ENCODE measurements at regions of chr2 and their contacts with region 1.

Region 1: DNA sequence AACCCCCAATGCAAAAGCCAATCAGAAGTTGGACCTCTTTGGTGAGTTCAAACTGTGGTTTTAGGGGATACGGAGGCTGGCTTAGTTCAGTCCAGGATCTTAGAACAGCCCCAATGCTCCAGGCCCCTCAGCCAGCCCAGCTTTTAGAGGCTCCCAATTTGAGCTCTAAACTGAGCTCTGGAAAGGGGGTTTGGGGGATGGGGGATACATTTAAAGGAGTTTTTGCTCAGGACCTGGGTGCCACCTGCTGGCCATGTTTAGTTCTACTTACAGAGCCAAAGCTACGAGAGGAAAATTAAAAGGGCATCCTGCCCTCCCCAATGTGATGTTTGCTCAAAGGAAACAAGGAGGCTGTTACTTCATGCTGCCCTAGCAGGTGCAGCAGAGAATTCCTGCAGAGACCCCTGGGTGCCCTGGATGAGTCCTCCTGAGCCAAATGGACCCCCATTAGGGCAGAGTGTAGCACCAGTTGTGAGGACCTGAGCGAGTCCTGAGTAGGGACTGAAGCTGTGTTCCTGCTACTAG is 15.9 kb upstream of the TMEM214 start:
- DNase-seq: peak; percentile 70
- H3K4me3 Mint-ChIP-seq: no peak overlapping the region
- H3K27ac Mint-ChIP-seq: no peak overlapping the region
- H3K4me1 Mint-ChIP-seq: peaks cover 37% of the 10 kb centered on the region
- H3K27me3 Mint-ChIP-seq: no peaks in the 10 kb centered on the region
- CTCF ChIP-seq: peak; percentile 83

Region 2: GRCh38 chr2:26892922-26893524 is 123.8 kb before region 1 on chr2:
- CTCF ChIA-PET with region 1: no interaction called
- intact Hi-C with region 1: no loop called
- DNase-seq: no peak
- H3K4me3 Mint-ChIP-seq: no peak overlapping the region
- H3K27ac Mint-ChIP-seq: no peak overlapping the region
- H3K4me1 Mint-ChIP-seq: no peaks in the 10 kb centered on the region
- H3K27me3 Mint-ChIP-seq: peaks cover 68% of the 10 kb centered on the region
- CTCF ChIP-seq: no peak

Region 3: DNA sequence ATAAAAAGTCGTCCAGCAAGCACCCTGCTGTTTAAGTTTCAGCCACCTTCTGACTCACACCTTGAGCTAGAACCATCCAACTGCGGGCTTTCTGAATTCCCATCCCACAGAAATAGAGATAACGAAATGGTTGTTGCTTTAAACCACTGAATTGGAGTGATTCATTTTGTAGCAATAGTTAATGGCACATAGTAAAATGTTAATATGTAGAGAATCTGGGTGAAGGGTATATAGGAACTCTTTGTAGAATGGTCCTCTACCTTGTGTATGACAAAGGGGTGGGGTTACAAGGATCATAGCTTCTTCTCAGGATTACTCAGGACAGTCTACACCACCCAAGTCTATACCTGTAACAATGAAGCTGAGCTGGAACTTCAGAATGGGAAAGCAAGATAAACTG is 48.9 kb before region 1 on chr2:
- CTCF ChIA-PET with region 1: interaction called, 144 read pairs
- intact Hi-C with region 1: no loop called
- DNase-seq: no peak
- H3K4me3 Mint-ChIP-seq: no peak overlapping the region
- H3K27ac Mint-ChIP-seq: no peak overlapping the region
- H3K4me1 Mint-ChIP-seq: peaks cover 30% of the 10 kb centered on the region
- H3K27me3 Mint-ChIP-seq: peaks cover 19% of the 10 kb centered on the region
- CTCF ChIP-seq: no peak

Region 4: DNA sequence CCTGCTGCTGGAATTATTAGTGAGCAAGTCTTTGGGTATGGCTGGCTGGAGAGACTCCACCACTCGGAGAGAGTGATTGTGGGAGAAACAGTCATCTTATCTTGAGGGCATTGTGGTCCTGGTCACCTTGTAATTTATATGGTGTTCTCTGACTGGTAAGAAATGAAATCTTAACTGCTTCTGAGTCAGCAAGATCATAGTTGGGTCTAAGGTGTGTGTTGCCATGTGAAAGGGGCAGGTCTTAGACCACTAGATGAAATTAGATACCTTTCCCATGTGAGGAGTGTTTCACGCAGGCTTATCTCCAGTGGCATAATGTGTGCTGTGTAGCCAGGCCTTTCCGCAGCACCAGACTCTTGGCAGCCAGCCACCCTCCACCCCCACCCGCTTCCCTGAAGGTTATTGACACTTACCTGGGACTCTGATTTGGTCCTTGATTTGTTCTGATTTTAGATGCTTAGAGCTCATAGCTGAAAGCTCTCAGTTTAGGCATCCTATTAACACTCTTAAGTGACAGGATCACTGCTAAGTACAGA is 38.7 kb before region 1 on chr2:
- CTCF ChIA-PET with region 1: interaction called, 8 read pairs
- intact Hi-C with region 1: loop called (anchors 5 kb)
- DNase-seq: peak; percentile 70
- H3K4me3 Mint-ChIP-seq: no peak overlapping the region
- H3K27ac Mint-ChIP-seq: no peak overlapping the region
- H3K4me1 Mint-ChIP-seq: peaks cover 29% of the 10 kb centered on the region
- H3K27me3 Mint-ChIP-seq: no peaks in the 10 kb centered on the region
- CTCF ChIP-seq: no peak

Region 5: GRCh38 chr2:27489498-27490397 is 472.9 kb after region 1 on chr2 and contains the start of gene IFT172:
- CTCF ChIA-PET with region 1: no interaction called
- intact Hi-C with region 1: no loop called
- DNase-seq: peak; percentile 98
- H3K4me3 Mint-ChIP-seq: peak within 1 kb of the TSS; percentile 80
- H3K27ac Mint-ChIP-seq: peak within 1 kb of the TSS; percentile 85
- H3K4me1 Mint-ChIP-seq: peaks cover 7% of the 10 kb centered on the region
- H3K27me3 Mint-ChIP-seq: no peaks in the 10 kb centered on the region
- CTCF ChIP-seq: no peak
- total RNA-seq, gene IFT172: 37.5 and 41.7 TPM in 2 replicates

Region 6: DNA sequence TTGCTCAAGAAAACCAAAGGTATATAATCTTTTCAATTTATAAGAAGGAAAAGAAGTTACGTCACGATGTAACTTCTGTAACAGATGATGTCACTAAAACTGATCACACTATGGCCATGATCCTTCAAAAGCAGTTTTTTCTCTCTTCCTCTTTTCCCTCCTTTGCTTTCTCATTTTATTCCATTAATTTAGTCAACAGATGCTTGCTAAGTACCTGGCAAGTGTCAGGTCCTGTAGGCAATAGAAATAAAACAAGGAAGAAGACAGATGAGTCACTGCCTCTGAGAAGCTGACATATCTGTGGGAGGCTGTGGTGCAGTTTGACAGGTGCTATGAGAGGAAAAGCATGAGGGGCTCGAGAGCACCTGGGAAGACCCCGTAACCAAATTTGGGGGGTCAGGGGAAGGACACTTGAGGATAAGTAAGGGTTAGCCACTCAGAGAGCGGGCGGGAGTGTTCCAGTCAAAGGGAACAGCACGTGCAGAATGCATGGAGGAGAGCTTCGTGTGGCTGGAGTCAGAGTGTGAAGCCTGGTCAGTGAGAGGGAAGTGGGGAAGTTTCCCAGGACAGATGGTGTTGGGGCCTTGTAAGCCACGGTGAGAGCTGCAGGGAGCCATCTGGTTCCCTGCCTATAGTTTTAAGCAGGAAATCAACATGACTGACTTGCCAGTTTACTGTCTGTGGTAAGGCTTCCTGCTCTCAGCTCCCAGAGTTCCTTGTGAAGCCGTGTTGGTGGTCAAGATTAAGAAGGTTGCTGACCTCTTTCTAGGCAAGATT is 1177.0 kb after region 1 on chr2:
- CTCF ChIA-PET with region 1: no interaction called
- intact Hi-C with region 1: no loop called
- DNase-seq: no peak
- H3K4me3 Mint-ChIP-seq: no peak overlapping the region
- H3K27ac Mint-ChIP-seq: no peak overlapping the region
- H3K4me1 Mint-ChIP-seq: peaks cover 9% of the 10 kb centered on the region
- H3K27me3 Mint-ChIP-seq: no peaks in the 10 kb centered on the region
- CTCF ChIP-seq: no peak